Transverse colon (tissue), 4 donors: ENCODE measurements at regions of chr1 and their contacts with region 1.

Region 1: DNA sequence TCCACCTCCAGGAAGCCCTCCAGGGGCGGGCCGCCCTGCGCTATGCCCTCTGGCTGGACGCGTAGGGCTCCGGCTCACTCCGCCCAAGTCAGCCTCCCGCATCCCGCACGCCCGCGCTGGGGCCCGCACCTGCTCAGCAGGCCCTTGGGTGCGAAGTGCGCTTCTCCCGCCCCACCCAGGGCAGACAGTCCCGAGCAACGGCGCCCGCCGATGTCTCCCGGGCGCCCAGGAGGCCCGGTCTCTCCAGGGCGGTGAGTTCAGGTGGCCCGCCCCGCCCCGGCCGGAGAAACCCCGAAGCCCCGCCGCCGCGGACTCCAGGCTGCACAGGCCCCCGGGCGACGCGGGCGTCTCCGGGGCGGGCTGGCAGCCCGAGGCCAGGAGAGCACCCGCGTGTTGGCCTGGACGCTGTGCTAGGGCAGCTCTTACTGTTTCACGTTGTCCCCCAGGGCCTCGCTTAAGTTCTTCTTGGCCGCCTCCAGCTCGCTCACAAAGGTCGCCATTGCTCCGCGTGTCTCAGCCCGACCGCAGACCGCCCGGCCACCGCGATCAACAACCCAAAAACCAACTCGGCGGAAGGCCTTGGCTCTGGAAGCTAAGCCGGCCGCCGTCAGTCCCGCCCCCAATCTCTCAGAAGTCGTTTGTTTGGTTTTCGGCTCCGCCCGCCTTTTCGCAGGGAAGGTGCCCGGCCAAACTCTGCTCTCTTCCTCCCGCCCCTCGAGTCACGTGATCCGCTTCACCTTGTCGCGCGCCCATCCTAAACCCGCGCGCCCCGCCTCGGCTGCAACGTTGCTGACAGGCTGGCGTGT is at the start of gene TADA1:
- DNase-seq: peak; percentile 99
- H3K4me3 ChIP-seq: peak within 1 kb of the TSS; percentile 75 to 95 (median 84)
- H3K27ac ChIP-seq: peak within 1 kb of the TSS; percentile 93 to 99 (median 97)
- H3K4me1 ChIP-seq: peaks cover 8 to 26% (median 20%) of the 10 kb centered on the region in 4 donors
- H3K27me3 ChIP-seq: no peaks in the 10 kb centered on the region
- CTCF ChIP-seq: no peak
- EP300 ChIP-seq: no peak
- POLR2A ChIP-seq: peak; percentile 67
- total RNA-seq, gene TADA1: 1.5 to 21.7 (median 12.0) TPM

Region 2: GRCh38 chr1:166838766-166839599 is 37.0 kb before region 1 on chr1 and contains the start of gene POGK:
- in situ Hi-C with region 1: no loop called
- intact Hi-C with region 1: loop called (anchors 2 kb)
- DNase-seq: peak; percentile 94
- H3K4me3 ChIP-seq: peak within 1 kb of the TSS; percentile 56 to 68 (median 65)
- H3K27ac ChIP-seq: peak within 1 kb of the TSS; percentile 93 to 97 (median 94)
- H3K4me1 ChIP-seq: peaks cover 22 to 46% (median 42%) of the 10 kb centered on the region in 4 donors
- H3K27me3 ChIP-seq: peaks cover 2% of the 10 kb centered on the region
- CTCF ChIP-seq: peak in 1 of 5 experiments; percentile 12
- EP300 ChIP-seq: no peak
- POLR2A ChIP-seq: peak; percentile 66
- total RNA-seq, gene POGK: 16.8 to 29.9 (median 24.9) TPM